ENCODE measurements at regions of chr1 and their contacts with region 1.

Region 1: GRCh38 chr1:90564164-90564563 is 152.9 kb downstream of the BARHL2 start:
- H3K4me3 ChIP-seq: no peak overlapping the region
- H3K27ac ChIP-seq: no peak overlapping the region
- H3K4me1 ChIP-seq: no peaks in the 10 kb centered on the region
- CTCF ChIP-seq: no peak

Region 2: GRCh38 chr1:90386899-90387720 is 177.1 kb before region 1 on chr1:
- CTCF ChIA-PET with region 1: no interaction called
- POLR2A ChIA-PET with region 1: no interaction called
- H3K4me3 ChIP-seq: no peak overlapping the region
- H3K27ac ChIP-seq: no peak overlapping the region
- H3K4me1 ChIP-seq: no peaks in the 10 kb centered on the region
- CTCF ChIP-seq: no peak

Region 3: DNA sequence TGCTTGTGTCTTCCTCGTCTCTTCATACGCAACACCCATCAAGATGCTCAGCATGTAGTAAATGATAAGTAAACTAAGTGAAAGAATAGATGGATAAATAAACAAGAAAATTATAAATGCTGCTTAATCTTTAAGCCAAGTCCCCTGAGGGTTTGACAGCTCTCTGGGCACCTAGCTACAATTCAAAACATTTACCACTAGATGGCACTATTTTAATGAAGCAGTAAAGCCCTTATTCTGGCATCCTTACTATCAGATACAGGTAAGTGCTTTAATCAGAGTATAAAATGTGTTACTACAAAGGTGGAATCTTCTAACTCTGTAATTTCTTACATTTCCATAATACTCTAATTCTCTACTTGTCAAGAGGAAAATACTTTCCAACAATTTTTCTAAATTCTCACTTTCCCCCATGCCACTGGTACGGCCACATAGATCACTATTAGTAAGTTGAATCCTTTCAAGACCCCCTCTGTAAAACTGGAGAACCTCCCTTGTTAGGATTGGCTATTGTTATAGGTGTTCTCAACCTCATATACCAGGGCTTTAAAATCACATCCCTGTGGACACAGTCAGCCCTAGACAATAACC is 15.1 kb after region 1 on chr1:
- CTCF ChIA-PET with region 1: interaction called, 16 read pairs
- POLR2A ChIA-PET with region 1: no interaction called
- H3K4me3 ChIP-seq: no peak overlapping the region
- H3K27ac ChIP-seq: no peak overlapping the region
- H3K4me1 ChIP-seq: no peaks in the 10 kb centered on the region
- CTCF ChIP-seq: no peak

Measured in HEK293 (cell line).